SK-N-SH (cell line): ENCODE measurements at regions of chr3 and their contacts with region 1.

Region 1: DNA sequence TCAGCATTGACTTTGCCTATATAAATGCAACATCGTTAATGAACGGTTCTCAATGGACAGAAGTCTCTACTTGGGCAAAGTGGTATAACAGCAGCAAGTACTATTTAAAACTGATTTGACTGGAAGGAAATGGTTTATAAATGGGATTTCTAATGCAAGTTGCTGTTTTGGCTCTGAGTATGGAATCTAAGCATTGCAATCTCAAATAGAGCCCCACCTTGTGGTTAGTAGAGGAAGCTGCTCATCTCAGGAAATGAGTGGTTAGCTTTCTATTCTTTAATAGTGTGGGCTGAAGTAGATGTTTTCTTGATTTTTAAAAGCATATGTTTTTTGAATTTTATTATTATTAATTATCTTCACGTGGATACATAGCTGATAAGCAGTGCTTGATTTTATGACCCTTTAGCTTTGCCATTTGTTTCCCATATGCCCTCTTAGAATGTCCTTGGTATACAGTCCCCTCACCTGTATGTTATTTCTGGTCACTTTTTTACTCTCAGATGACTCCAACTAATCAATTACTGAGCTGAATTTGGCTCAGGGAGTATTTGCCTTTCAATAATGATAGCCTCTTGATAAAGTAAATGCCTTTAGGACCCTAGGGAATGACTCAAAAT is 67.1 kb downstream of the OXSM start:
- DNase-seq: peak; percentile 59
- H3K4me3 ChIP-seq: no peak overlapping the region
- H3K27ac ChIP-seq: no peak overlapping the region
- H3K4me1 ChIP-seq: peaks cover 0 to 12% of the 10 kb centered on the region in 2 experiments; a peak in 2 of 4 replicates
- H3K27me3 ChIP-seq: no peaks in the 10 kb centered on the region
- CTCF ChIP-seq: peak; percentile 90
- EP300 ChIP-seq: no peak
- RAD21 ChIP-seq: peak; percentile 67

Region 2: DNA sequence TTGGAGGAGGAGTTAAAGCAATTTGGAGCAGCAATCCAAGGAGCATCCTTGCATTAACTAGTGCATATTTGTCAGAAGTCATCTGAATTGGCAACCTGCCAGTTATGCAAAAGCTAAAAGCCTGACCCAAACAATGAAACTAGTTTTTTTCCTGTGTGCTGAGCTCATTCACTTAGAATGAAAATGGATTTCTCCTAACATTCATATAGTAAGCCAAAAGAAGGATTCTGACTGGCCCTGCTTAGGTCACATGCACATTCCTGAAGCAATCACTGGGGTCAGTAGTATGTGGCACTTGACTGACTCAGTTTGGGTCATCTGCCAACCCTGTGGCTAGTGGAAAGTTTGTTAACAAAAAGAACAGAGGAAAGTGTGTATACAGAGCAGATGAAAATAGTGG is 36.6 kb before region 1 on chr3:
- CTCF ChIA-PET with region 1: no interaction called
- POLR2A ChIA-PET with region 1: no interaction called
- DNase-seq: no peak
- H3K4me3 ChIP-seq: no peak overlapping the region
- H3K27ac ChIP-seq: peak overlapping the region in 1 of 2 experiments; percentile 69; a peak in 2 of 4 replicates
- H3K4me1 ChIP-seq: peaks cover 0 to 15% of the 10 kb centered on the region in 2 experiments; a peak in 2 of 4 replicates
- H3K27me3 ChIP-seq: no peaks in the 10 kb centered on the region; the same call in 1 of the 2 replicates
- CTCF ChIP-seq: no peak
- EP300 ChIP-seq: peak in 1 of 2 experiments; percentile 36; a peak in 1 of 4 replicates
- RAD21 ChIP-seq: no peak

Region 3: DNA sequence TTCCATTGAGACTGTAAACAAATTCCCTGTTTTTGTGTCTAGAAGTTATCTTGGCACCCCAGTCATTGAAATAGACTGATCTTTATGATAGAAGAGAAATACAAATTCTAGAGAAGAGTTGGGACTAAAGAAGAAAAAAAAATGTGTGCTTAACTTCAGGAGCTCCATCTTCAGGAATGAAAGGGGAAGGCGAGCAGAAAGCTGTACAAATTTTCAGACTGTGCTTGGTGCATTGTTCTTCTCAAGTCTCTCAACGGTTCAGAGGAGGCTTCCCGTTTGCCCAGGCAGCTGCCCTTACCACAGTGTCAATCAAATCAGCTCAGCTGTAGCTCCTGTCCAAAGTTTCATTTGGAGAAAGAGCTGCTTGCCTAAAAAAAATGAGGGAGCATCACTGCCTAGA is 25.4 kb before region 1 on chr3:
- CTCF ChIA-PET with region 1: interaction called, 12 read pairs
- POLR2A ChIA-PET with region 1: no interaction called
- DNase-seq: peak; percentile 14
- H3K4me3 ChIP-seq: no peak overlapping the region
- H3K27ac ChIP-seq: peak overlapping the region in 1 of 2 experiments; percentile 91; a peak in 2 of 4 replicates
- H3K4me1 ChIP-seq: peaks cover 0 to 7% of the 10 kb centered on the region in 2 experiments; a peak in 3 of 4 replicates
- H3K27me3 ChIP-seq: no peaks in the 10 kb centered on the region
- CTCF ChIP-seq: peak; percentile 44
- EP300 ChIP-seq: no peak
- RAD21 ChIP-seq: peak; percentile 62

Region 4: DNA sequence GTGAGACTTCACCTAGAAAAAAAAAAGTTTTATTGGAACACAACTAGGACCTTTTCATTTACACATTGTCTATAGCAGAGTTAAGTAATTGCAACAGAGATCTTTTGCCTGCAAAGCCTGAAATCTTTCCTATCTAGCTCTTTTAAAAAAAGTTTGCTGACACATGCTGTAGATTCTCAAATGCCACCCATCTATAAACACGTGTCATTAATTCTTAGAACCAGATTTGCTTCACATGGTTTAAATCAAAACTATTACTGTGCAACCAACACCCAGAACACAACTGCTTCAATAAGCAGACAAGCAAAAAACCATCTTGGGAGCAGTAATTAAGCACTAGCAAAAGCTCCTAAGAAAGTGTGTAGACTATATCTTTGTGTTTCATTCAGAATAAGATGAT is 12.1 kb before region 1 on chr3:
- CTCF ChIA-PET with region 1: interaction called, 21 read pairs
- POLR2A ChIA-PET with region 1: no interaction called
- DNase-seq: no peak
- H3K4me3 ChIP-seq: no peak overlapping the region
- H3K27ac ChIP-seq: no peak overlapping the region
- H3K4me1 ChIP-seq: no peaks in the 10 kb centered on the region
- H3K27me3 ChIP-seq: no peaks in the 10 kb centered on the region
- CTCF ChIP-seq: no peak
- EP300 ChIP-seq: no peak
- RAD21 ChIP-seq: no peak

Region 5: GRCh38 chr3:26712211-26713026 is 855.4 kb after region 1 on chr3:
- CTCF ChIA-PET with region 1: interaction called, 11 read pairs
- POLR2A ChIA-PET with region 1: no interaction called
- DNase-seq: peak; percentile 26
- H3K4me3 ChIP-seq: no peak overlapping the region; a peak in 1 of 4 replicates
- H3K27ac ChIP-seq: no peak overlapping the region
- H3K4me1 ChIP-seq: no peaks in the 10 kb centered on the region; a peak in 1 of 4 replicates
- H3K27me3 ChIP-seq: no peaks in the 10 kb centered on the region
- CTCF ChIP-seq: peak; percentile 58
- EP300 ChIP-seq: no peak
- RAD21 ChIP-seq: peak; percentile 89

Region 6: GRCh38 chr3:26862953-26863352 is 1005.9 kb after region 1 on chr3:
- CTCF ChIA-PET with region 1: no interaction called
- POLR2A ChIA-PET with region 1: no interaction called
- DNase-seq: no peak
- H3K4me3 ChIP-seq: no peak overlapping the region
- H3K27ac ChIP-seq: no peak overlapping the region
- H3K4me1 ChIP-seq: no peaks in the 10 kb centered on the region
- H3K27me3 ChIP-seq: no peaks in the 10 kb centered on the region
- CTCF ChIP-seq: no peak
- EP300 ChIP-seq: no peak
- RAD21 ChIP-seq: no peak